H1 (cell line): ENCODE measurements at regions of chr6 and their contacts with region 1.

Region 1: GRCh38 chr6:166956444-166957086 is at the start of gene RNASET2:
- DNase-seq: peak in 1 of 2 experiments; percentile 100
- H3K4me3 ChIP-seq: peak within 1 kb of the TSS; percentile 58 to 83 (median 72)
- H3K27ac ChIP-seq: no peak within 1 kb of the TSS
- H3K4me1 ChIP-seq: peaks cover 2 to 12% (median 5%) of the 10 kb centered on the region in 4 experiments; a peak in 6 of 7 replicates
- H3K27me3 ChIP-seq: peaks cover 0 to 6% (median 0%) of the 10 kb centered on the region in 4 experiments; a peak in 3 of 7 replicates
- CTCF ChIP-seq: no peak
- EP300 ChIP-seq: no peak
- POLR2A ChIP-seq: no peak; a peak in 1 of 3 replicates
- RAD21 ChIP-seq: no peak
- total RNA-seq, gene RNASET2: 20.8 and 22.9 TPM in 2 replicates

Region 2: DNA sequence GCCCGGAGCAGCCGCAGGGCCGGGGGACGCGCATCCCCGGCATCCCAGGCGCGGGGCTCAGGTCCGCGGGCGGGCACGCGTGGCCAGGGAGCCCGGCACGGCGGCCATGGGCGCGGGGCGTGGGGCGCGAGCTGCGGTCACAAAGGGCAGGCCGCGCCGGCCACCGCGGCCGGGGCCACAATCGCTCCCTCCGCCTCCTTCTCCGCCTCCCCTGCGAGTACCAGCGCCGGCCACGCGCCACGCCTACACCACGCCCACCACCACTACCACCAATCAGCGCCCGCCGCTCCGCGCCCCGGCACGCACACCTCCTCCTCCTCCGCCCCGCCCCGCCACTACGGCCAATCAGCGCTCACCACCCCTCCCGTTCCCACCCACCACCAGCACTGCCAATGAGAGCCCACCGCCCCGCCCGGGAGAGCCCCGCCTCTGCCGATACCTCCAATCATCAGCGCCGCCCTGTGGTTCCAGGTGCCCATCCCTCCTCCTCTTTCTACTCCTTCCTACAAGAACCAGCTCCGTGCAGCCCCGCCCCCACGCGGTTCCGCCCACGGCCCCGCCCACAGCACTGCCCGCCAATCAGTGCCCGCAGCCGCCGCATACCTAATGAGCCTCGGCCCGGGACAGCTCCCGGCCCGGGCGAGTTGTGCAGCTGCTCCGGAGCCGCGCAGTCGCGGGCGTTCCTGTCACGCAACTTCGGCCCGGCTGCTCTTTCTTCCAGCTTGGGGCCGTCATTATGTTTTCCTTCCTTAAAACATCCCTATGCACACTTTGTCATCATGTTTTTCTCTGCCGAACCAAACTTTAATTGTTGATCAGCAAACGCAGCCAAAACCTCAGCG is 329.3 kb before region 1 on chr6 and contains the start of gene RPS6KA2:
- CTCF ChIA-PET with region 1: no interaction called
- POLR2A ChIA-PET with region 1: no interaction called
- DNase-seq: peak; percentile 98 to 100
- H3K4me3 ChIP-seq: peak within 1 kb of the TSS; percentile 67 to 77 (median 76)
- H3K27ac ChIP-seq: peak within 1 kb of the TSS; percentile 46; the same call in 1 of the 2 replicates
- H3K4me1 ChIP-seq: peaks cover 3 to 14% (median 9%) of the 10 kb centered on the region in 4 experiments; a peak in 6 of 7 replicates
- H3K27me3 ChIP-seq: peaks cover 0 to 31% (median 15%) of the 10 kb centered on the region in 4 experiments; a peak in 5 of 7 replicates
- CTCF ChIP-seq: no peak
- EP300 ChIP-seq: no peak
- POLR2A ChIP-seq: peak; percentile 82 to 84
- RAD21 ChIP-seq: no peak
- total RNA-seq, gene RPS6KA2: 24.4 and 25.7 TPM in 2 replicates

Region 3: GRCh38 chr6:166969390-166970002 is 12.9 kb after region 1 on chr6:
- CTCF ChIA-PET with region 1: interaction called, 10 read pairs
- POLR2A ChIA-PET with region 1: interaction called, 4 read pairs
- DNase-seq: no peak
- H3K4me3 ChIP-seq: no peak overlapping the region
- H3K27ac ChIP-seq: no peak overlapping the region
- H3K4me1 ChIP-seq: no peaks in the 10 kb centered on the region; a peak in 1 of 7 replicates
- H3K27me3 ChIP-seq: no peaks in the 10 kb centered on the region; a peak in 1 of 7 replicates
- CTCF ChIP-seq: no peak
- EP300 ChIP-seq: no peak
- POLR2A ChIP-seq: no peak
- RAD21 ChIP-seq: no peak

Region 4: GRCh38 chr6:167020206-167020605 is 63.6 kb after region 1 on chr6:
- CTCF ChIA-PET with region 1: no interaction called
- POLR2A ChIA-PET with region 1: no interaction called
- DNase-seq: no peak
- H3K4me3 ChIP-seq: no peak overlapping the region
- H3K27ac ChIP-seq: no peak overlapping the region
- H3K4me1 ChIP-seq: no peaks in the 10 kb centered on the region
- H3K27me3 ChIP-seq: no peaks in the 10 kb centered on the region
- CTCF ChIP-seq: no peak
- EP300 ChIP-seq: no peak
- POLR2A ChIP-seq: no peak
- RAD21 ChIP-seq: no peak

Region 5: DNA sequence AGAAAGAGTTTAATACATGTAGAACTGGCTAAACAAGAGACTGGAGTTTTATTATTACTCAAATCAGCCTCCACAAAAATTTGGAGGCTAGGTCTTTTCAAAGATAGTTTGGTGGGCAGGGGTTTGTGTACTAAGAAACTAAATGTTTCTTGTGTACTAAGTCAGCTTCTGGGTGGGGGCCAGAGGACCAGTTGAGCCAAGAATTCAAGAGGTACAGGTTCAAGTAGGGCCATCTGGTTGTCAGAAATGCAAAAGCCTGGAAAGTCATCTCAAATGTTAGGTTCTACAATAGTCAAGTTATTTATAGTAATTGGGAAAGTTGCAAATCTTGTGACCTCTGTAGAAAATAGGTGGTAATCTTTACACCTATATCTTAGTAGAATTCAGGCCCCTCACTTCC is 94.3 kb after region 1 on chr6:
- CTCF ChIA-PET with region 1: no interaction called
- POLR2A ChIA-PET with region 1: no interaction called
- DNase-seq: no peak
- H3K4me3 ChIP-seq: no peak overlapping the region
- H3K27ac ChIP-seq: no peak overlapping the region
- H3K4me1 ChIP-seq: no peaks in the 10 kb centered on the region
- H3K27me3 ChIP-seq: no peaks in the 10 kb centered on the region
- CTCF ChIP-seq: no peak
- EP300 ChIP-seq: no peak
- POLR2A ChIP-seq: no peak
- RAD21 ChIP-seq: no peak

Region 6: DNA sequence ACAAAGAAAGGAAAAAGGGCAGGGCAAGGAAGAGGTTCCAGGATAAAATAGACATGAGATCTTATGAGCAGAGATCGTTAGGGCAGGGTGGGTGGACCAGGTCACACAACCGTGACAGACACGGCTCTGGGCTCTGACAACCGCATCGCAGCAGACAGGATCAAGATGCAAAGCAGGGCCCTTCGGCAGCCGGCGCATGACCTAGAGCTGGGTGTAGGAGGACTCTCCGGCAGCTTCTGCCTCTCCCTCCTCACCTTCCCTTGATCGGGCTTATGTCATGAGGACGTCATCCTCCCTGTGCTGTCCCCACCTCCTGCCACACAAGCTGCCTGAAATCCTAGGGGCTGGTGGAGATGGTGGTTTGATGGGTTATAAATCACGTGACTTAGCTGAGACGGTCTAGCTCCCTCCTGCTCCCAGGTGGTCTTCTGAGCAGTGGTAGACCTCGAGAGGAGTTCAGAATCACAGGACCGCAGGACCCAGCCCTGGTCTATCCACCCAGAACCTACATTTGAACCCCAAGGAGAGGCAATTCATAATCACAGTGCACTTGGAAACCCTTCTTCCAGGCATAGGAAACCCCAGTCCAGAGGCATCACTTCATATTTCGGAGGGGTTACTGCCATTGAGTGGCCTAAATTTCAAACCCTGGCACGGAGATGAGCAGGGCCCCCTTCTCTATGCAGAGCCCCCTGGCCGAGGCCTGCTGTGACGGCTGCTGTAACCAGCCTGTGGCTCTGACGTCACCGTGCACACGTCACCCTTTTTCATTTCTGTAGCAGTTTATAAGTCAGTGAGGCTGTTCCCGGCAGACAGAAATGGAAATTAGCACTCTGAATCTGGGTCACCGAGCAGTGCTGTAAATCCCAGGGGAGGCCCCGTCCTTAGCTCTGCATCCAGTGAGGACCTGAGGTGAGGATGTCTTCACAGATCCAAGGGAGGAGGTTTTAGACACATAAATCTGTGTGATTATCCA is 157.7 kb after region 1 on chr6:
- CTCF ChIA-PET with region 1: no interaction called
- POLR2A ChIA-PET with region 1: no interaction called
- DNase-seq: no peak
- H3K4me3 ChIP-seq: no peak overlapping the region
- H3K27ac ChIP-seq: no peak overlapping the region
- H3K4me1 ChIP-seq: peaks cover 0 to 5% (median 0%) of the 10 kb centered on the region in 4 experiments; a peak in 3 of 7 replicates
- H3K27me3 ChIP-seq: no peaks in the 10 kb centered on the region
- CTCF ChIP-seq: no peak
- EP300 ChIP-seq: no peak
- POLR2A ChIP-seq: no peak
- RAD21 ChIP-seq: no peak